Posterior vena cava (tissue), 2 donors: ENCODE measurements at regions of chr16 and their contacts with region 1.

Region 1: GRCh38 chr16:62692685-62693084 is 656.4 kb upstream of the CDH8 start:
- DNase-seq: no peak

Region 2: DNA sequence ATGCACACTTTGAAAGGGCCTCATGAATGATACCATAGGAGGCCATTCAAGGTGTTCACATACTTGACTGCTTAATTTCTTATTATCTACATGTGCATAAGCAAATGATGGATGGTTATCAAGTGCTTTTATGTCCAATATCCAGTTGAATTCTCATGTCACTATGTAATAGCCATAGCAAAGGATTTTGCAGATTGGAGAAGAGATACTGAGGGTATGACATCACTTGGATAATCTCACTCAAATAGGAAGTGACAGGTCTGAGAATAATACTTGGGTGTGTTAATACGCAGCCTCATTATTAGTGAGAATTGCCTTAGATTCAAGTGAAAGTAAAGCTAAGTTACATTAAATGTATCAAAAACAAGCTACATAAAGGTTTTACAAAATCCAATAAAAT is 1220.6 kb after region 1 on chr16:
- intact Hi-C with region 1: loop called in 1 of 2 experiments (anchors 10 kb)
- DNase-seq: no peak